ENCODE measurements at regions of chr7 and their contacts with region 1.

Region 1: GRCh38 chr7:49885593-49886285 is 112.3 kb downstream of the VWC2 start:
- DNase-seq: peak; percentile 11
- H3K4me3 ChIP-seq: no peak overlapping the region
- H3K27ac ChIP-seq: no peak overlapping the region
- H3K4me1 ChIP-seq: no peaks in the 10 kb centered on the region
- H3K27me3 ChIP-seq: no peaks in the 10 kb centered on the region
- CTCF ChIP-seq: no peak
- EP300 ChIP-seq: no peak
- POLR2A ChIP-seq: no peak

Region 2: GRCh38 chr7:49911909-49912308 is 26.2 kb after region 1 on chr7:
- in situ Hi-C with region 1: no loop called
- intact Hi-C with region 1: loop called (anchors 1 kb)
- DNase-seq: no peak
- H3K4me3 ChIP-seq: no peak overlapping the region
- H3K27ac ChIP-seq: no peak overlapping the region
- H3K4me1 ChIP-seq: no peaks in the 10 kb centered on the region
- H3K27me3 ChIP-seq: no peaks in the 10 kb centered on the region
- CTCF ChIP-seq: no peak
- EP300 ChIP-seq: no peak
- POLR2A ChIP-seq: no peak

Measured in transverse colon (tissue), 4 donors.